H1 (cell line): ENCODE measurements at regions of chr9 and their contacts with region 1.

Region 1: DNA sequence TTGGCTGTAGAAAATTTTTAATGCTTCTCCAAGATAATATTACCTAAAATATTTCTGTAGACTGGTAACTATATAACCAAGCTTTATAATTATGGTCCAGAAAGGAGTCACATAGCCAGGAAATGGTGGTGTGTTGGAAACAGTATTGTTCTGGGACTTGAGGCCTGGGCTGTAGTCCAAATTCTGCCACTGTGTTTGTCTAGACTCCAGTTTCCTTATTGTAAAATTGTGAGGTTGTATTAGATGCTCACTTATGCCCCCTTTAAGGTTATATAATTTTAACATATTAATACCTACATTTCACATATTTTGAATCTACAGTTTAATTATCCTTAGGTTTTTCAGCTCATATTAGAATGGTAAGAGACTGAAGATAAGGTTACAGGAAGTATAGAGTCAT is 42.4 kb downstream of the STX17 start:
- DNase-seq: no peak
- H3K4me3 ChIP-seq: no peak overlapping the region
- H3K27ac ChIP-seq: no peak overlapping the region
- H3K4me1 ChIP-seq: no peaks in the 10 kb centered on the region
- H3K27me3 ChIP-seq: no peaks in the 10 kb centered on the region
- CTCF ChIP-seq: no peak
- EP300 ChIP-seq: no peak
- POLR2A ChIP-seq: no peak
- RAD21 ChIP-seq: no peak

Region 2: GRCh38 chr9:99824378-99825171 is 124.3 kb before region 1 on chr9:
- CTCF ChIA-PET with region 1: interaction called, 10 read pairs
- POLR2A ChIA-PET with region 1: no interaction called
- DNase-seq: peak in 1 of 2 experiments; percentile 93
- H3K4me3 ChIP-seq: peak overlapping the region; percentile 58 to 68 (median 66)
- H3K27ac ChIP-seq: no peak overlapping the region
- H3K4me1 ChIP-seq: peaks cover 0 to 35% (median 18%) of the 10 kb centered on the region in 4 experiments; a peak in 6 of 7 replicates
- H3K27me3 ChIP-seq: peaks cover 65 to 95% (median 90%) of the 10 kb centered on the region in 4 experiments
- CTCF ChIP-seq: peak in 2 of 3 experiments; percentile 68 to 78; a peak in 3 of 4 replicates
- EP300 ChIP-seq: no peak
- POLR2A ChIP-seq: peak in 1 of 2 experiments; percentile 39; a peak in 1 of 3 replicates
- RAD21 ChIP-seq: peak; percentile 80 to 83

Region 3: GRCh38 chr9:99919930-99920329 is 29.0 kb before region 1 on chr9:
- CTCF ChIA-PET with region 1: interaction called, 10 read pairs
- POLR2A ChIA-PET with region 1: no interaction called
- DNase-seq: no peak
- H3K4me3 ChIP-seq: no peak overlapping the region
- H3K27ac ChIP-seq: no peak overlapping the region
- H3K4me1 ChIP-seq: no peaks in the 10 kb centered on the region; a peak in 2 of 7 replicates
- H3K27me3 ChIP-seq: no peaks in the 10 kb centered on the region
- CTCF ChIP-seq: no peak
- EP300 ChIP-seq: no peak
- POLR2A ChIP-seq: no peak
- RAD21 ChIP-seq: no peak

Region 4: DNA sequence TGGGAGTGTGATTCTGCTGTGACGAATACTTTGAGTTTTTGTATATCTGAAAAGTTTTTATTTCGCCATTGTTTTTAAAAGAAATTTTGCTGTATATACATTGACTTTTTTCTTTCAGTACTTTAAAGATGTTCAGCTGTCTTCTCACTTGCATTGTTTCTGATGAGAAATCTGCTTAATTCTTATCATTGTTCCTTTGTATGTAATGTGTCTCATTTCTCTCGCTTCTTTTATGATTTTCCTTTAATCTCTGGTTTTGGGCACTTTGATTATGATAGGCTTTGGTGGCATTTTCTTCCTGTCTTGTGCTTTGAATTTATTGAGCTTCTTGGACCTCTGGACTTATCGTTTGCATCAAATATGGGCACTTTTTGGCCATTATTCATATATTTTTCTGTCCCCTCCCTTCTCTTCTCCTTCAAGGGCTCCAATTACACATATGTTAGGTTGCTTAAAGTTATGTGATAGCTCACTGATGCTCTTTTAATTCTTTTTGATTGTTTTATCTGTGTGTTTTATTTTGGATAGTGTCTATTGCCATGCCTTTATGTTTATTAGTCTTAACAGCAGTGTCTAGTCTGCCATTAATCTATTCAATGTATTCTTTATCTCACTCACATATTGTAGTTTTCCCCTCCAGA is 11.8 kb before region 1 on chr9:
- CTCF ChIA-PET with region 1: interaction called, 26 read pairs
- POLR2A ChIA-PET with region 1: no interaction called
- DNase-seq: no peak
- H3K4me3 ChIP-seq: no peak overlapping the region
- H3K27ac ChIP-seq: no peak overlapping the region
- H3K4me1 ChIP-seq: no peaks in the 10 kb centered on the region
- H3K27me3 ChIP-seq: no peaks in the 10 kb centered on the region
- CTCF ChIP-seq: no peak
- EP300 ChIP-seq: no peak
- POLR2A ChIP-seq: no peak
- RAD21 ChIP-seq: no peak

Region 5: GRCh38 chr9:99962680-99963261 is 13.9 kb after region 1 on chr9:
- CTCF ChIA-PET with region 1: interaction called, 11 read pairs
- POLR2A ChIA-PET with region 1: no interaction called
- DNase-seq: no peak
- H3K4me3 ChIP-seq: no peak overlapping the region
- H3K27ac ChIP-seq: no peak overlapping the region
- H3K4me1 ChIP-seq: peaks cover 0 to 5% (median 4%) of the 10 kb centered on the region in 4 experiments; a peak in 4 of 7 replicates
- H3K27me3 ChIP-seq: no peaks in the 10 kb centered on the region
- CTCF ChIP-seq: no peak
- EP300 ChIP-seq: no peak
- POLR2A ChIP-seq: no peak
- RAD21 ChIP-seq: no peak